Activated CD4-positive, alpha-beta T cell treated with anti-CD3 and anti-CD28 coated beads for 36 hours (primary cell): ENCODE measurements at regions of chr4 and their contacts with region 1.

Region 1: DNA sequence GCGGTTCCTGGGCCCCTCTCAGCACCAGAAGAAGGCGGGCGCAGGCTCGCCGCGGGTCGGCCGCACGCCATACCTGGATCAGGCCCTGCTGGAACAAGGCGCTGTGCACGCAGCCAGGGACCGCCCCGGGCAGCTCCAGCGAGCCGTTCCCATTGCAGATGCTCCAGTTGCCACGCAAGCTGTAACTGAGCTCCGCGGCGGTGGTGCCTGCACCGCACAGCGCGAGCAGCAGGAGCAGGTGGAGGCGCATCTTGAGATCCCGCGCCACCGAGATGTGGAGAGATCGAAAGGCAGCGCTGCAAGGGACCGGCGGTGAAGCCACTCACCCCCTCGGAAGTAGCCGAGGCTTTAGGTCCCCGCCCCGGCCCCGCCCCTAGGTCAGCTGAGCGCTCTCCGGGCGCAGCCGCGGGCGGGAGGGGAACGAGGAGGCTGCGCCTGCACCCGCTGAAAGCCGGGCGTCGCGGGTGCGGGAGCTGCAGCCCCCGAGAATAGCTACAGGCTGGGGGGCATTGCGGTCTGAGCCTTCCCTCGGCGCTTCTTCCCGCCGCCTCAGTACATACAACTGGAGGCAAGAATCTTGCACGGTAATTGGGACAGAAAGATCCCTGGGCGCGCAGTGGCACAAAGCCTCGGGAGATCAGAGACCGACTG is at the start of gene MANBA:
- DNase-seq: peak; percentile 93
- ATAC-seq: peak; percentile 93
- H3K4me3 Mint-ChIP-seq: peak within 1 kb of the TSS; percentile 90
- H3K27ac Mint-ChIP-seq: peak within 1 kb of the TSS; percentile 89
- H3K4me1 Mint-ChIP-seq: peaks cover 25% of the 10 kb centered on the region
- H3K27me3 Mint-ChIP-seq: peaks cover under 1% of the 10 kb centered on the region
- total RNA-seq, gene MANBA: 12.0 to 13.3 TPM

Region 2: GRCh38 chr4:102789317-102789717 is 28.5 kb after region 1 on chr4:
- CTCF ChIA-PET with region 1: no interaction called
- POLR2A ChIA-PET with region 1: no interaction called
- intact Hi-C with region 1: loop called in 1 of 2 experiments (anchors 2 kb)
- DNase-seq: no peak
- ATAC-seq: peak; percentile 63
- H3K4me3 Mint-ChIP-seq: no peak overlapping the region
- H3K27ac Mint-ChIP-seq: peak overlapping the region; percentile 25
- H3K4me1 Mint-ChIP-seq: peaks cover 33% of the 10 kb centered on the region
- H3K27me3 Mint-ChIP-seq: no peaks in the 10 kb centered on the region

Region 3: DNA sequence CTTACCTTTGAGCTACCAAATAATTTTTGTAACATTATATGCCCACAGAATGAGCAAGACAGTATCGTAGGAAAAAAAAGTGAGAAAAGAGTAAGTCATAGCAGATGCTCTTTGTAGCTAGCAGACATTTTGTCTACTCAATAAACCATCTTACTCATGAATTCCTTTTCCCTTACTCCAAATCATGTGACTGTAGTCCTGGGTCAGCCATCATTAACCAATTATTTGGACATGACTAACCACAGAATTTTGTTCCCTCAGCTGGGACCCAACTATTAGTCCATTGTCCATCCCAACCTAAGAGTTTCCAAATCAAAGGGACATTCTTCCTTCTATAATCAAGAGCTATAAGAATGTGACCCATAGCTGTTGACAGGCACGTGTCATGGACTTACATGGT is 55.2 kb after region 1 on chr4:
- CTCF ChIA-PET with region 1: no interaction called
- POLR2A ChIA-PET with region 1: interaction called, 7 read pairs
- intact Hi-C with region 1: loop called in 1 of 2 experiments (anchors 2 kb)
- DNase-seq: no peak
- ATAC-seq: peak; percentile 21
- H3K4me3 Mint-ChIP-seq: no peak overlapping the region
- H3K27ac Mint-ChIP-seq: peak overlapping the region; percentile 83
- H3K4me1 Mint-ChIP-seq: peaks cover 89% of the 10 kb centered on the region
- H3K27me3 Mint-ChIP-seq: no peaks in the 10 kb centered on the region

Region 4: DNA sequence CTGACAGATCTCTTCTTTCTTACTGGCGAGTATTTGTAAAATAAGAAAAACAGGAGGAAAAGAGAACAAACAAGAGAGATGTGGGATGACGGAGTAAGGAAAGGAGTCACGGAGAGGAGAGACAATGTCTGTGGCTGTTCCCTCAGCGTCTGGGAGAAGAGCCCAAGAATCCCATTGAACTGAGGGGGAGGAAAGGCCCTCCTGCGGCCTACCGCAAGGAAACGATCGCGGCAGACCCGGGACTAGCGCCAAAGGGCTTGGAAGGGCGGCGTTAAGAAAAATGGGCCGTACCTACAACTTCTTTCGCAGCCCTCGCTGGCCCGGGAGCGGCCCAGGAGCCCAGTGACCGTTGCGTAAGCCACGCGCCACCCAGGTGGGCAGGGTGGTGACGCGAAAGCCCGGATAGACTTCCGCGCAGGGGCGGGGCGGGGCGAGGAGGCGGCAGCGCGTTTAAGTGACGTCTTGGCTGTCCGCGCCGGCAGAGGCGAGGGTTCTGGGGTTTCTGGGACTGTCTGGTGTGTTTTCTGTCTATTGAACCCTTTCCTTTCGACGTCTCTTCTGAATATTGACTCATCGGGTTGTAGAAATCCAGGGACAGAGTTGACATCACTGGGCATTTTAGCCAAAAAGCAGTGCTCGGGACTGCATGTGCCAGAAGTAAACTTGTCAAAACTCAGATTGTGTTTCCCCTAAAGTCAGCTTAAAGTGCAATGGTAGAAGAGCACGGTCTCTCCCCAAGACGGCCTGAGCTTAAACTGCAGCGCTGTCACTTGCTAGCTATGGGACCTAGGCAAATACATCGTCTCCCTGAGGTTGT is 258.7 kb after region 1 on chr4 and contains the start of gene SLC9B1:
- CTCF ChIA-PET with region 1: no interaction called
- POLR2A ChIA-PET with region 1: no interaction called
- intact Hi-C with region 1: loop called in 1 of 2 experiments (anchors 1 kb)
- DNase-seq: peak; percentile 97
- ATAC-seq: peak; percentile 98
- H3K4me3 Mint-ChIP-seq: peak within 1 kb of the TSS; percentile 86
- H3K27ac Mint-ChIP-seq: peak within 1 kb of the TSS; percentile 97
- H3K4me1 Mint-ChIP-seq: peaks cover 19% of the 10 kb centered on the region
- H3K27me3 Mint-ChIP-seq: no peaks in the 10 kb centered on the region
- total RNA-seq, gene SLC9B1: 1.8 to 3.7 TPM